CD4-positive, alpha-beta T cell (primary cell): ENCODE measurements at regions of chr7 and their contacts with region 1.

Region 1: DNA sequence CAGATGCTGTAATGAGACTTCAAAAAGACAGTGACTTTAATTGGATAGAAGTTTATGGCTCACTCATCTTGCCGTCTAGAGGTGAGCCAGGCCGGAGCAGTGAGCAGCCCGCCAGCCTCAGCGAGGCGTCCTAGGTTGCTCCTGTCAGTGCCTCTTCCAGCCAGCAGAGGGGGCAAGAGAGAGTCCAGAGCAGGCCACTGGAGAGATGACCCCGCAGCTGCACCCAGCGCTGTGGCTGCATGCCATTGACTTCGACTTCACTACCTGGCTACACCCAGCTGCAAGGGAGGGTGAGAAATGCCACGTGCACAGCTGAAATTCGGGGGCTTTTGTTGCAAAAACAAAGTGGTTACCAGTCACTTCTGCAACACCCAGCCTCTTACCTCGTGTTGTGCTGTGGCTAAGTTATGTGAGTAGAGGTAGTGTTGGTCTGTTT is 26.5 kb downstream of the NUB1 start:
- DNase-seq: peak; percentile 59 to 88 (median 68)
- ATAC-seq: peak; percentile 97
- H3K4me3 ChIP-seq: no peak overlapping the region
- H3K4me3 Mint-ChIP-seq: no peak overlapping the region
- H3K27ac ChIP-seq: no peak overlapping the region
- H3K27ac Mint-ChIP-seq: peak overlapping the region; percentile 25
- H3K4me1 ChIP-seq: peaks cover 8% of the 10 kb centered on the region
- H3K4me1 Mint-ChIP-seq: peaks cover 6% of the 10 kb centered on the region
- H3K27me3 ChIP-seq: no peaks in the 10 kb centered on the region
- H3K27me3 Mint-ChIP-seq: no peaks in the 10 kb centered on the region
- CTCF ChIP-seq: peak; percentile 96

Region 2: GRCh38 chr7:151315038-151315655 is 53.0 kb before region 1 on chr7:
- CTCF ChIA-PET with region 1: interaction called, 20 read pairs
- POLR2A ChIA-PET with region 1: no interaction called
- intact Hi-C with region 1: loop called in 1 of 2 experiments (anchors 5 kb)
- DNase-seq: peak; percentile 60 to 90 (median 74)
- ATAC-seq: peak; percentile 95
- H3K4me3 ChIP-seq: no peak overlapping the region
- H3K4me3 Mint-ChIP-seq: no peak overlapping the region
- H3K27ac ChIP-seq: no peak overlapping the region
- H3K27ac Mint-ChIP-seq: no peak overlapping the region
- H3K4me1 ChIP-seq: peaks cover 9% of the 10 kb centered on the region
- H3K4me1 Mint-ChIP-seq: peaks cover 9% of the 10 kb centered on the region
- H3K27me3 ChIP-seq: no peaks in the 10 kb centered on the region
- H3K27me3 Mint-ChIP-seq: no peaks in the 10 kb centered on the region
- CTCF ChIP-seq: peak; percentile 93

Region 3: GRCh38 chr7:151408839-151409666 is 40.9 kb after region 1 on chr7:
- CTCF ChIA-PET with region 1: interaction called, 3 read pairs
- POLR2A ChIA-PET with region 1: interaction called, 3 read pairs
- intact Hi-C with region 1: loop called (anchors 1 to 5 kb)
- DNase-seq: peak in 13 of 14 experiments; percentile 27 to 96 (median 67)
- ATAC-seq: peak; percentile 84
- H3K4me3 ChIP-seq: peak overlapping the region; percentile 65
- H3K4me3 Mint-ChIP-seq: peak overlapping the region; percentile 80
- H3K27ac ChIP-seq: peak overlapping the region; percentile 53 to 93
- H3K27ac Mint-ChIP-seq: peak overlapping the region; percentile 79
- H3K4me1 ChIP-seq: peaks cover 59% of the 10 kb centered on the region
- H3K4me1 Mint-ChIP-seq: peaks cover 23% of the 10 kb centered on the region
- H3K27me3 ChIP-seq: peaks cover 22 to 23% of the 10 kb centered on the region in 2 experiments
- H3K27me3 Mint-ChIP-seq: peaks cover 33% of the 10 kb centered on the region
- CTCF ChIP-seq: no peak

Region 4: GRCh38 chr7:151631968-151632749 is 264.0 kb after region 1 on chr7:
- CTCF ChIA-PET with region 1: interaction called, 4 read pairs
- POLR2A ChIA-PET with region 1: interaction called, 3 read pairs
- intact Hi-C with region 1: loop called in 1 of 2 experiments (anchors 5 kb)
- DNase-seq: peak; percentile 76 to 96 (median 89)
- ATAC-seq: peak; percentile 83
- H3K4me3 ChIP-seq: peak overlapping the region; percentile 68
- H3K4me3 Mint-ChIP-seq: peak overlapping the region; percentile 95
- H3K27ac ChIP-seq: peak overlapping the region; percentile 75 to 82
- H3K27ac Mint-ChIP-seq: peak overlapping the region; percentile 99
- H3K4me1 ChIP-seq: peaks cover 15% of the 10 kb centered on the region
- H3K4me1 Mint-ChIP-seq: peaks cover 45% of the 10 kb centered on the region
- H3K27me3 ChIP-seq: no peaks in the 10 kb centered on the region
- H3K27me3 Mint-ChIP-seq: no peaks in the 10 kb centered on the region
- CTCF ChIP-seq: no peak

Region 5: DNA sequence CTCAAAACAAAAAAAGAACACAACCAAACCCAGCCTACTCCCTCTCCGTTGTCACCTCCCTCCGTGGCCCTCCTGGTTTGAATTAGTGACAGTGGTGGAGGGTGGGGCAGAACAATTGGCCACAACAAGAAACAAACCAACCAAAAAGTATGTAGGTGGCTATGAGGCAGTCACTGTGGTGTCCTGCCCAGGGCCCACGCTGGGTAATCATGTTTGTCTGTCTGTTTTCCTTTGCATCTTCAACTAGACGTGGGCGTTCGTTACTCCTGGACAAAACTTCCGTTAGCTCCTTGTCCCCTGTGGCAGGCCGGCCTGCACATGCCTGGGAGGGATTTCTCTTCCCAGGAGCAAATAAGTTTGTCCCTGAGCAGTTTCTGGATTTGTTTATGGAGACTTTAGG is 1229.4 kb after region 1 on chr7:
- CTCF ChIA-PET with region 1: no interaction called
- POLR2A ChIA-PET with region 1: no interaction called
- intact Hi-C with region 1: no loop called
- DNase-seq: no peak
- ATAC-seq: no peak
- H3K4me3 ChIP-seq: no peak overlapping the region
- H3K4me3 Mint-ChIP-seq: no peak overlapping the region
- H3K27ac ChIP-seq: no peak overlapping the region
- H3K27ac Mint-ChIP-seq: no peak overlapping the region
- H3K4me1 ChIP-seq: no peaks in the 10 kb centered on the region
- H3K4me1 Mint-ChIP-seq: no peaks in the 10 kb centered on the region
- H3K27me3 ChIP-seq: no peaks in the 10 kb centered on the region
- H3K27me3 Mint-ChIP-seq: peaks cover 4% of the 10 kb centered on the region
- CTCF ChIP-seq: no peak